Testis (tissue), 5 donors: ENCODE measurements at regions of chr15 and their contacts with region 1.

Region 1: GRCh38 chr15:99275525-99276128 is 24.3 kb downstream of the LRRC28 start:
- DNase-seq: no peak
- H3K4me3 ChIP-seq: no peak overlapping the region
- H3K27ac ChIP-seq: no peak overlapping the region
- H3K4me1 ChIP-seq: no peaks in the 10 kb centered on the region
- H3K27me3 ChIP-seq: no peaks in the 10 kb centered on the region
- CTCF ChIP-seq: no peak
- POLR2A ChIP-seq: no peak

Region 2: DNA sequence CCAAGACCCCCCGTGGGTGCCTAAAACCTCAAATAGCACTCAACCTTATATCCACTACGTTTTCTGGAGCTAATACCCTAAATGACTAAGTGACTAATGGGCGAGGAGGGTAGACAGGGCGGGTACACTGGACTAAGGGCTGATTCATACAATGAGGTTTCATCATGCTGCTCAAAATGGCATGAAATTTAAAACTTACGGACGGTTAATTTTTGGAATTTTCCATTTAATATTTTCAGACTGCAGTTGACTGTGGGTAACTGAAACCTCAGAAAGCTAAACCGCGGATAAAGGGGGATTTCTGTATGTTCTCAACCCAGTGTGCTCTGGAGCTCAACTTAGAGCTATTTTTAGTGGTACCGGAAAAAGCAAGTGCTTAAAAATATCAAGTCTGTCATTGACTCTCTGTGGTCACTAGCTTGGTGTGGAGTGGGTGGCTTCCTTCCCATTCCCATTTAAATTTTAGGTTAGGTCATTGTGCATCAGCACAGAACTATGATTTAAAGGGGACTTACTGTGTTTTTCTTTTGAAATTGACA is 48.5 kb after region 1 on chr15:
- intact Hi-C with region 1: no loop called
- DNase-seq: no peak
- H3K4me3 ChIP-seq: no peak overlapping the region
- H3K27ac ChIP-seq: no peak overlapping the region
- H3K4me1 ChIP-seq: no peaks in the 10 kb centered on the region
- H3K27me3 ChIP-seq: no peaks in the 10 kb centered on the region
- CTCF ChIP-seq: no peak
- POLR2A ChIP-seq: no peak

Region 3: GRCh38 chr15:99733268-99734039 is 457.8 kb after region 1 on chr15 and contains the start of gene LYSMD4:
- intact Hi-C with region 1: loop called (anchors 10 kb)
- DNase-seq: peak; percentile 99
- H3K4me3 ChIP-seq: peak within 1 kb of the TSS; percentile 79 to 98
- H3K27ac ChIP-seq: peak within 1 kb of the TSS; percentile 84 to 94
- H3K4me1 ChIP-seq: peaks cover 25% of the 10 kb centered on the region
- H3K27me3 ChIP-seq: no peaks in the 10 kb centered on the region
- CTCF ChIP-seq: peak in 1 of 3 experiments; percentile 8
- POLR2A ChIP-seq: peak; percentile 70
- total RNA-seq, gene LYSMD4: 23.6 to 27.1 TPM